ENCODE measurements at regions of chr5 and their contacts with region 1.

Region 1: DNA sequence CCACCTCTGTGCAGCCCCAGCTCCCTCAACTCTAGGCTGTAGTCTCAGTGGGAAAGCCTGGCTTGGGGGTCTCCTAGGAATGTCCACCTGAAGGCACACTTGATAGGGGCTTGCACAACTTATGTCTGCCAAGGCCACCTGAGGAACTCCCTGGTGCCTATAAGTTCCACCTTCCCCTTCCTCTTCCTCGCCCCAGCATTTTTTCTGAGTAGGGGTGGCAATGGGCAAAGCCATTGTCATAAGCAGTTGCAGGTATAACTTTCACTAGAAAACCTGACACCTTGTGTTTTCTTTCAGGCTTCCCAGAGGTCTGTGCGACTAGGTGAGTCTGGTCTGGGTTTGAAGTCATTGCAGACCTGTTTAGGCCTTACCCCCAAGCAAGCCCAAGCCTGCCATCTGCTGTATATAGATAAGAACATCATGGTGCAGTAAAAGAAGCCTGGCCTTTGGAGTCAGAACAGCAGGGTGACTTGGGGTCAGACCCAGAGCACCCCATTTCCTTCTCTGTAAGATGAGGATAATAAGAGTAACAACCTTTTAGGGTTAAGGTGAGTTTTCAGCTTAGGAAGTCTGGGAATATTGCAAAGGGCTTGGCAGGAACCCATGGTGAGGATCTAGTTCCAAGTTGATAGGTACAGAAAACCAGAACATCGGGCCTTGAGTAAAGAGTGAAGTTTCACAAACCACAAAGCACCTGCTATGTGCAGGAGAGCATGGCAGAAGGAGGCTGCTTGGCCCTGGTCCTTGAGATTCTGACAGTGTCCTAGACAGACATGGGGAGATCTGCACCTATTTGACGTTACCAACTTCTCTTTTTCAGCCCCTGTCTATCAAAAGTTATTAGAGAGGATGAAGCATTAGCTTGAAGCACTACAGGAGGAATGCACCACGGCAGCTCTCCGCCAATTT is 33.8 kb downstream of the TGFBI start:
- DNase-seq: peak; percentile 59 to 74 (median 74)
- H3K4me3 ChIP-seq: no peak overlapping the region
- H3K27ac ChIP-seq: no peak overlapping the region
- H3K4me1 ChIP-seq: no peaks in the 10 kb centered on the region
- H3K27me3 ChIP-seq: peaks cover 0 to 13% (median 0%) of the 10 kb centered on the region in 5 experiments

Region 2: GRCh38 chr5:135887351-135887864 is 175.2 kb before region 1 on chr5:
- CTCF ChIA-PET with region 1: interaction called, 14 read pairs
- POLR2A ChIA-PET with region 1: no interaction called
- DNase-seq: peak; percentile 67 to 77 (median 73)
- H3K4me3 ChIP-seq: peak overlapping the region in 1 of 7 experiments; percentile 12
- H3K27ac ChIP-seq: no peak overlapping the region
- H3K4me1 ChIP-seq: peaks cover 0 to 2% (median 0%) of the 10 kb centered on the region in 4 experiments
- H3K27me3 ChIP-seq: peaks cover 2 to 29% (median 15%) of the 10 kb centered on the region in 5 experiments

Region 3: GRCh38 chr5:135944967-135945560 is 117.6 kb before region 1 on chr5:
- CTCF ChIA-PET with region 1: interaction called, 19 read pairs
- POLR2A ChIA-PET with region 1: no interaction called
- DNase-seq: peak; percentile 77 to 88 (median 84)
- H3K4me3 ChIP-seq: no peak overlapping the region
- H3K27ac ChIP-seq: no peak overlapping the region
- H3K4me1 ChIP-seq: no peaks in the 10 kb centered on the region
- H3K27me3 ChIP-seq: peaks cover 2 to 25% (median 11%) of the 10 kb centered on the region in 5 experiments

Region 4: DNA sequence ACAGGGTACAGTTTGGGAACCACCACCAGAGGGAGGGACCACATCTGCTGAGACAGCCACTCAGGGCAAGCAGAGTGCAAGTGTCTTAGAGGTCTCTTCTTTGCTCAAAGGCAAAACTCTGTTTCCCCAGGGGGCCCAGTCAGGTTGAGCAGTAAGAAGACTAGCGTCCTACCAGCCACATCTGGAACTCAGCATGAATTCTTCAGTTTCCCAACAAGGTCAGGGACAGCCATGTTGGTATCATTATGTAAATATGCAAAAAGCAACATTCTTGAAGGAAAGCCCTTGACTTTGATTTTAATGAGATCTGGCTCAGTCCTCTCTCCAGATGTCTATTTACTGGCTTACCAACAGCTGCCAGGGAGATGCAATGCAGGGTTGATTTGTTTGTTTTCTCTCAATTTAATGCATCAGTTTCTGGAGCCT is 12.9 kb after region 1 on chr5:
- CTCF ChIA-PET with region 1: interaction called, 20 read pairs
- POLR2A ChIA-PET with region 1: no interaction called
- DNase-seq: no peak
- H3K4me3 ChIP-seq: no peak overlapping the region
- H3K27ac ChIP-seq: no peak overlapping the region
- H3K4me1 ChIP-seq: peaks cover 0 to 11% (median 4%) of the 10 kb centered on the region in 4 experiments
- H3K27me3 ChIP-seq: peaks cover 4 to 43% (median 42%) of the 10 kb centered on the region in 5 experiments